Activated CD8-positive, alpha-beta T cell treated with anti-CD3 and anti-CD28 coated beads for 36 hours (primary cell): ENCODE measurements at regions of chr20 and their contacts with region 1.

Region 1: GRCh38 chr20:5529331-5530148 is 212.8 kb upstream of the PROKR2 start:
- DNase-seq: peak; percentile 96
- ATAC-seq: peak; percentile 96
- H3K4me3 Mint-ChIP-seq: peak overlapping the region; percentile 35
- H3K27ac Mint-ChIP-seq: peak overlapping the region; percentile 64
- H3K4me1 Mint-ChIP-seq: peaks cover 17% of the 10 kb centered on the region
- H3K27me3 Mint-ChIP-seq: no peaks in the 10 kb centered on the region
- CTCF ChIP-seq: peak; percentile 52

Region 2: GRCh38 chr20:5402903-5403531 is 126.5 kb before region 1 on chr20:
- CTCF ChIA-PET with region 1: no interaction called
- POLR2A ChIA-PET with region 1: no interaction called
- intact Hi-C with region 1: no loop called
- DNase-seq: peak; percentile 43
- ATAC-seq: peak; percentile 67
- H3K4me3 Mint-ChIP-seq: no peak overlapping the region
- H3K27ac Mint-ChIP-seq: no peak overlapping the region
- H3K4me1 Mint-ChIP-seq: peaks cover 4% of the 10 kb centered on the region
- H3K27me3 Mint-ChIP-seq: peaks cover 13% of the 10 kb centered on the region
- CTCF ChIP-seq: peak; percentile 44

Region 3: GRCh38 chr20:5513975-5514516 is 15.5 kb before region 1 on chr20:
- CTCF ChIA-PET with region 1: interaction called, 10 read pairs
- POLR2A ChIA-PET with region 1: no interaction called
- intact Hi-C with region 1: no loop called
- DNase-seq: no peak
- ATAC-seq: no peak
- H3K4me3 Mint-ChIP-seq: no peak overlapping the region
- H3K27ac Mint-ChIP-seq: no peak overlapping the region
- H3K4me1 Mint-ChIP-seq: peaks cover 7% of the 10 kb centered on the region
- H3K27me3 Mint-ChIP-seq: no peaks in the 10 kb centered on the region
- CTCF ChIP-seq: no peak

Region 4: DNA sequence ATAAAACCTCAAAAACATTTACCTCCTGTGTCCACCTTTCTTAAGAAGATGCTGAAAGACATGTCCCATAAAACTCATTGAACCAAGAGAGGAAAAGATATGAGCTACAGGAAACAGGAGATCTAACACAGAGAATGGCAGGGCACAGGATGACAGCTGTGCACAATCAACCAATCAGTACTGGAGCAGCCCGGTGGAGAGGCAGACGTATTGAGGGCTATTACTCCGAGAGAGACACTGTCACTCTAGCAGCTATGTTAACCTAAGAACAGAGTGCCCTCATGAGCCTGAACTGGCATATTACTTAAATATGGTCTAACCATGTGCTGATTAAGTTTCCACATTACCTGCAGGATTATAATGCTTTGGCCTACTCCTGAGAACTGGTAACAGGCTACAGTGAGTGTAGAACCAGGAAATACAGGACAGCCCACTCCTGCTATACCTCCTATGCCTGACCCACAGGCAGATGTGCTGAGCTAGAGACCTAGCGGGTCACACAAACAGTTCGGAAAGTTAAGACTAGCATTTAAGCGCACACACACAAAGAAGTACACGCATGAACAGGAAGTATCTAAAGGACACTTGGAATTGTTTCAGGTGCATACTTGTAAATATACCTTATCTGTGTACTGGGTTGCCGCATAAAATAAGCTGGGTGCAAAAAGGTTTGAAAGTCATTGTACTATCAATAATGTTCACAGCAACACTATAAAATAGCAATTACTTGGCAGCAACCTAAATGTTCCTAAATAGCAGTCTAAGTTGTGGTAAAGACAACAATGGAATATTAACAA is 21.4 kb after region 1 on chr20:
- CTCF ChIA-PET with region 1: interaction called, 51 read pairs
- POLR2A ChIA-PET with region 1: interaction called, 3 read pairs
- intact Hi-C with region 1: no loop called
- DNase-seq: no peak
- ATAC-seq: no peak
- H3K4me3 Mint-ChIP-seq: no peak overlapping the region
- H3K27ac Mint-ChIP-seq: peak overlapping the region; percentile 21
- H3K4me1 Mint-ChIP-seq: peaks cover 17% of the 10 kb centered on the region
- H3K27me3 Mint-ChIP-seq: no peaks in the 10 kb centered on the region
- CTCF ChIP-seq: no peak

Region 5: DNA sequence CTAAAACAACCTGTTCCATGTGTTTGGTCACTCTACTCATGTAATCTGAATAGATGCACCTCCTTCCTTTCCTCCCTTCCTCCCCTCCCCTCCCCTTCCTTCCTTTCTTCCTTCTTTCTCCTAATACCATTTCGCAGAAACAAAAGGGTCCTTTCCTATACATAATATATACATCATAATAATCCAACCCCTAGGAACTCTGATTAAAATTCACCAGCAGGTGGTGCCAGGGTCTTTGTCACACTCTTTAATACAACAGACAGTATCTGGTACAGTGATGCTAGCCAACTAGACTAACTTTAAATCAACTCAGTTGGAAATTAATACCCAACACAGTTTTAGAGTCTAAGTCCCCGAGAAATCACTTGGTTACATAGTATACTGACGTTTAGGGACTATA is 39.5 kb after region 1 on chr20:
- CTCF ChIA-PET with region 1: interaction called, 33 read pairs
- POLR2A ChIA-PET with region 1: no interaction called
- intact Hi-C with region 1: no loop called
- DNase-seq: peak; percentile 74
- ATAC-seq: peak; percentile 93
- H3K4me3 Mint-ChIP-seq: no peak overlapping the region
- H3K27ac Mint-ChIP-seq: peak overlapping the region; percentile 84
- H3K4me1 Mint-ChIP-seq: peaks cover 20% of the 10 kb centered on the region
- H3K27me3 Mint-ChIP-seq: no peaks in the 10 kb centered on the region
- CTCF ChIP-seq: peak; percentile 67

Region 6: DNA sequence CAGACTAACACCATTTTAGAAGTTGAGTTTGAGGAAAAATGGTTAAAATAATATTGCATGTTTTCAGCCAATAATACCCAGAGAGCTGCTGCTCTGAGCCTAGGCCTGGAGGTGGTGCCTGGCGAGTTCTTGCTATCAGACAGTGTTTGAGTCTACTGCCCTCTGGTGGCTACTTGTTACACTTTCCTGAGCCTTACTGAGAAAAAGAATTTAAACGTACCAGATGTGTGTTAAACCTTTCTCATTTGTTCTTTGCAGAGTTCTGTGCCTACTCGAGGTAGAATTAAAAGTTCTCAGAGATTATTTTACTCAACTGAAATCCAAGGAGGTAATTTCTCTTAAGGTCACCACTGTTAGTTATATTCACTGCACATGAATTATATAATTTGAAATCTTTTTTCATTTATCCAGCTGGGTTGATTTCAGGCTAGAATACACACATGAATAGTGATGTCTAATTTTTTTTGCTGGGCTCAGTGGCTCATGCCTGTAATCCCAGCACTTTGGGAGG is 258.9 kb after region 1 on chr20:
- CTCF ChIA-PET with region 1: interaction called, 194 read pairs
- POLR2A ChIA-PET with region 1: interaction called, 5 read pairs
- intact Hi-C with region 1: loop called (anchors 1 kb)
- DNase-seq: peak; percentile 88
- ATAC-seq: peak; percentile 98
- H3K4me3 Mint-ChIP-seq: no peak overlapping the region
- H3K27ac Mint-ChIP-seq: no peak overlapping the region
- H3K4me1 Mint-ChIP-seq: peaks cover 2% of the 10 kb centered on the region
- H3K27me3 Mint-ChIP-seq: no peaks in the 10 kb centered on the region
- CTCF ChIP-seq: peak; percentile 96

Region 7: DNA sequence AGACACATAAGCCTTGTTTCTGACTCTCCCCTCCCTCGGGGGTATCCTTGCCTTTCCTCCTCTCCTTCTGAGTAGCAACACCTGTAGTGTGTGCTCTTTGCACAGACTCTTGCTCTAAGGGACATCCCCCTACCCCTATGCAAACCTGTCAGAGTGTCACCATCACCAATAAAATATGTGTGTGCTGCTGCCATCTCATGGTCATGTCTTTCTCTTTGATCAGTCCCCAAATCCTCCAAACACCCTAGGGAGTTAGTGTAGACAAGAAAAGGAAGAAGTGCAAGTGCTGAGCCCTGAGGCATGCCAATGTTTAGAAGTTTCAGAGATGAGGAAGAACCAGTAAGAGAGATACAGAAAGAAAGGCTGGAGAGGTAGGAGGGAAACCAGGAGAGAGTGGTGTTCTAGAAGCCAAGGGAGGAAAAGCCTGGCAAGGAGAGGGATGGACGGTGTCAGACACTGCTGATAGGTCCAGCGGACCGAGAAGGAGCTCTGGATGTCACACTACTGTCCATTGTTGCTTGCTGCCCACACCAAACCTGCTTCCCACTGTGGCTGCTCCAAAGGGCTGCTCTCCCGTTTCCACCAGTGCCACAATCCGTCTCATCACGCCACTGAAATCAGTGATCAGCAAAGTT is 404.4 kb after region 1 on chr20:
- CTCF ChIA-PET with region 1: interaction called, 24 read pairs
- POLR2A ChIA-PET with region 1: no interaction called
- intact Hi-C with region 1: no loop called
- DNase-seq: peak; percentile 42
- ATAC-seq: peak; percentile 84
- H3K4me3 Mint-ChIP-seq: no peak overlapping the region
- H3K27ac Mint-ChIP-seq: no peak overlapping the region
- H3K4me1 Mint-ChIP-seq: peaks cover 8% of the 10 kb centered on the region
- H3K27me3 Mint-ChIP-seq: peaks cover 3% of the 10 kb centered on the region
- CTCF ChIP-seq: peak; percentile 21

Region 8: GRCh38 chr20:6074145-6074561 is 544.6 kb after region 1 on chr20:
- CTCF ChIA-PET with region 1: interaction called, 18 read pairs
- POLR2A ChIA-PET with region 1: no interaction called
- intact Hi-C with region 1: loop called (anchors 2 kb)
- DNase-seq: no peak
- ATAC-seq: peak; percentile 45
- H3K4me3 Mint-ChIP-seq: no peak overlapping the region
- H3K27ac Mint-ChIP-seq: no peak overlapping the region
- H3K4me1 Mint-ChIP-seq: no peaks in the 10 kb centered on the region
- H3K27me3 Mint-ChIP-seq: peaks cover 2% of the 10 kb centered on the region
- CTCF ChIP-seq: no peak